ENCODE measurements at regions of chr5 and their contacts with region 1.

Region 1: DNA sequence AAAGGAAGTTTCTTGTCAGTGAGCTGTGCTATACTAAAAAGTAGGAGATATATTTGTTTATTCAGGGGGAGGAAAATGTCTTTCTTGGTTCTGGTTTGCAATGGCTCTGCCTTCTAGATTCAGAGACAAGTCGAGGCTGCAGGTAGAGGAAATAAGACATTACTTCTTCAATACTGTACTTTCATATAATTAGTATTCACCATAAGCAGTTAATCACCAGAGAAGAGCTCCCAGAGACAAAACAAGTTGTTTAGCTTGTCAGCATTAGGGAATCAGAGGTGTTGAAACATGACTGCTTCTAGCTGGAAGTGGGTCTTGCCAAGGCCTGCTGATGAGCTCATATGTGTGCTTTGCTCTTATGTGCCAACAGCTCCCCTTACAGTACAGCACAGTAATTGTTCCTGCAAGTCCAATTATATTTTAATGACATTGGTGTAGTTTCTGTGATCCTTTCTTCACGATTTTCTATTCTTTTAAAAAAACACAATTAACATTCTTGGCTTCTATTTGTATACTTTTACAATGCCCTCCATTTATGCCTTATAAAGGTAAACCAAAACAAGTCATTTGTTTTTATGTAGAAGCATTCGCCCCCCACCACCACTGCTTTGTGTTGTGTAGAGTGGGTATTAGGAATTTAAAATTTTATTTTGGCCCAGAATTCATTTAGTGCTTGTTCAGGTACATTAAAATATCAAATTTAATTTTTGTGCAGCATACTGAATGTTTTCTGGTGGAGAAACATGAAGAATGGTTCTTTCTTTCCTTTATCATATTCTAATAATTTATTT is 112.2 kb downstream of the RPS23 start:
- DNase-seq: peak; percentile 61
- ATAC-seq: peak; percentile 97 to 98
- H3K4me3 ChIP-seq: no peak overlapping the region
- H3K27ac ChIP-seq: no peak overlapping the region
- H3K4me1 ChIP-seq: peaks cover 8% of the 10 kb centered on the region
- H3K27me3 ChIP-seq: no peaks in the 10 kb centered on the region
- CTCF ChIP-seq: peak; percentile 75

Region 2: DNA sequence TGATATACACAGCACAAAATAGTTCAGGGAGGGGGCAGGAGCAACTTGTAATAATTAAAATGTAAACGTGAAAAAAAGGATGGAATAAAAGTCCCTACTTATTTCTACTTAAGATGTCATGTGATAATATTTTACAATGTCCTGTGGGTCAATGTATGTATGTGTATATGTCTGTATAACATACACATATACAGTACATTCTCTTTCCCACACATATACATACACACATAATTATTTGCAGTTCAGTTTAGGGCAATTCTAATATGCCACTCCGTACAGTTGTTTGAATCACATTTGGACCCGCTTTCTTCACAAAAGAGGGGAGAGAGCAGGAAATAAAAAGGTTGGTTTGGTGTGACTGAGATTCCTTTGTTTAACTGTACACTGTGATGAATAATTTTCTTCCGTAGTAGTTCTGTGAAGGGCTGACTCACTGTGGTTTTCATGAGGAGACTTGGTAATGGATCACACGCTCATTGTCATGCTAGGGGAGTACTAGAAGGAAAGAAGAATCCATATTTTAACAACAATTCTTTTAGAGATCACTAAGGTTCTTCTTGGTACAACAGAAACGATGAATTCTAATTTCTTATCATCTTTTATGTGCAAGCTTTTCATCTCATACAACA is 745.8 kb before region 1 on chr5:
- intact Hi-C with region 1: no loop called
- DNase-seq: no peak
- ATAC-seq: no peak
- H3K4me3 ChIP-seq: no peak overlapping the region
- H3K27ac ChIP-seq: no peak overlapping the region
- H3K4me1 ChIP-seq: no peaks in the 10 kb centered on the region
- H3K27me3 ChIP-seq: no peaks in the 10 kb centered on the region
- CTCF ChIP-seq: no peak

Region 3: GRCh38 chr5:81513982-81514381 is 652.0 kb before region 1 on chr5:
- intact Hi-C with region 1: loop called (anchors 10 kb)
- DNase-seq: no peak
- ATAC-seq: no peak
- H3K4me3 ChIP-seq: no peak overlapping the region
- H3K27ac ChIP-seq: no peak overlapping the region
- H3K4me1 ChIP-seq: no peaks in the 10 kb centered on the region
- H3K27me3 ChIP-seq: no peaks in the 10 kb centered on the region
- CTCF ChIP-seq: no peak

Measured in lower lobe of right lung (tissue), 2 donors.